ENCODE measurements at regions of chr17 and their contacts with region 1.

Region 1: GRCh38 chr17:49556223-49556971 is 19.3 kb upstream of the NXPH3 start:
- DNase-seq: peak; percentile 81 to 94
- ATAC-seq: peak; percentile 91
- H3K4me3 ChIP-seq: no peak overlapping the region
- H3K27ac ChIP-seq: no peak overlapping the region
- H3K4me1 ChIP-seq: no peaks in the 10 kb centered on the region
- H3K27me3 ChIP-seq: no peaks in the 10 kb centered on the region

Region 2: DNA sequence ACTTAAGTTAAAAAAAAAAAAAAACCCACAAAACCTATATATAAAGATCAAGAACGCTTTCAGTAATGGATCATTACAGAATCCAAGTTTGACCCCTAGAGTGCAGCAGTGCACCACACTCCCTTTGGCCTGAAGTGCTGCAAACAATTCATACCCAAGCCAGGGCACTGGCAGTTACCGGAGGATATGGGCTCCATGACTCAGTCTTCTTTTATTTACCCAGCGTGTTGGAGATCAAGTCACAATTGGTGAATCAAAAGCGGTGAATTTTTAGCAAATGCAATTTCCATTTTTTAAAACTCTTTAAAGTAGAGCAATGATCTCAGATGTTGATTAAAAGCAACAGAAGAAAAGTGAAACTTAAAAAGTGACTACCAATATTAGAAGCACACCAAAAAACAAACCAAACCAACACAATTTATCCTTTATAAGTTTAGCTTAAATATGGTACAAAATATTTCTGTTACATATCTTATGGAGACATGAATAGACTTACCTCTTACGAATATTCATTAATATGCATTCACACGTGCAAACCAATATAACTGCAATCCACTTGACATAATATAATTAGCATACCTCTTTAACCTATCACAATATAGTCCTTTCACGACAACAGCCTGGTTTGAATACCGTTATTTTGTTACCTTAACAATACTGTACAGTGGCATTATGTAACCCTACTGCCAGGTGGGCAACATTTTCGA is 240.7 kb before region 1 on chr17:
- intact Hi-C with region 1: loop called (anchors 10 kb)
- DNase-seq: peak; percentile 78 to 80
- ATAC-seq: peak; percentile 95
- H3K4me3 ChIP-seq: no peak overlapping the region
- H3K27ac ChIP-seq: peak overlapping the region in 1 of 2 donors; percentile 40
- H3K4me1 ChIP-seq: peaks cover 0 to 4% of the 10 kb centered on the region in 2 donors
- H3K27me3 ChIP-seq: no peaks in the 10 kb centered on the region

Region 3: GRCh38 chr17:49407981-49408501 is 148.4 kb before region 1 on chr17:
- intact Hi-C with region 1: loop called in 1 of 2 experiments (anchors 10 kb)
- DNase-seq: peak; percentile 71 to 85
- ATAC-seq: peak; percentile 80
- H3K4me3 ChIP-seq: no peak overlapping the region
- H3K27ac ChIP-seq: no peak overlapping the region
- H3K4me1 ChIP-seq: no peaks in the 10 kb centered on the region
- H3K27me3 ChIP-seq: no peaks in the 10 kb centered on the region

Region 4: DNA sequence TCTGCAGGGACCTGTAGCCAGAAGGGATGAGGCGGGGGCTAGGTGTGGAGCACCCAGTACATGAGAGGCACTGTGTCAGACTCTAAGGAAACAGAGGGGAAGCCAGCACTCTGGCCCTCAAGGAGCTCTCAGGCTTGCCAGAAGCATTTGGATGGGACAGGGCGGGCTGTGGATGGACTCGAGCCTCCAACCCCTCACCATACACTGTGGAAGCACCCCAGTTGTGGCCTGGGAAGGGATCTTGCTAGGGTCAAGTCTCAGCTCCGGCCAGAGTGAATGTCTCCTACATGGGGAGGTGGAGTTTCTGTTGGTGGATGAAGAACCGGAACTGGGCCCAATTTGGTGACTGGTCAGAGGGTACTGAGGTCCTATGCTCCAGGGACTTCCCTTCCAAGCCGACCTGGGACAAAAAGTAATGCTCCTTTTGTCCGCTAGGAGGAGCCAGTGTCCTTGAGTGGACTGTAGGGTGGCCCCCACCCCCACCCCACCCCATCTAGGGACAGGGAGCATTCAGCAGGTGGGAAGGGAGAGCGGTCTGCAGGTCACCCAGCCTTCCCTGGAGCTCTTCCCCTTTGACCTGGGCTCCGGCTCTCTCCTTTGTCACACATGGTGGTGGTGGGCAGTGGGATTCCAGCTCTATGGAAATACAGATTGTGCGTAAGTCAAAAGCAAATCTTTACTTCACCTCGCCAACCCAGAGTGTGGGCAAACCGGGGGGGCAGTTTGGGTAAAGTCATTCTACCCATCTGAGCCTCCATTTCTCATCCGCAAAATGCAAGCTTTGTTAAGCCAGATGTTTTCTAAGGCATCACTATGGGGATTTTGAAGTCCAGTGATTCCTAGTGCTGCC is 121.4 kb before region 1 on chr17:
- intact Hi-C with region 1: loop called (anchors 2 kb)
- DNase-seq: peak in 1 of 2 donors; percentile 72
- ATAC-seq: peak; percentile 52
- H3K4me3 ChIP-seq: no peak overlapping the region
- H3K27ac ChIP-seq: no peak overlapping the region
- H3K4me1 ChIP-seq: no peaks in the 10 kb centered on the region
- H3K27me3 ChIP-seq: no peaks in the 10 kb centered on the region

Region 5: DNA sequence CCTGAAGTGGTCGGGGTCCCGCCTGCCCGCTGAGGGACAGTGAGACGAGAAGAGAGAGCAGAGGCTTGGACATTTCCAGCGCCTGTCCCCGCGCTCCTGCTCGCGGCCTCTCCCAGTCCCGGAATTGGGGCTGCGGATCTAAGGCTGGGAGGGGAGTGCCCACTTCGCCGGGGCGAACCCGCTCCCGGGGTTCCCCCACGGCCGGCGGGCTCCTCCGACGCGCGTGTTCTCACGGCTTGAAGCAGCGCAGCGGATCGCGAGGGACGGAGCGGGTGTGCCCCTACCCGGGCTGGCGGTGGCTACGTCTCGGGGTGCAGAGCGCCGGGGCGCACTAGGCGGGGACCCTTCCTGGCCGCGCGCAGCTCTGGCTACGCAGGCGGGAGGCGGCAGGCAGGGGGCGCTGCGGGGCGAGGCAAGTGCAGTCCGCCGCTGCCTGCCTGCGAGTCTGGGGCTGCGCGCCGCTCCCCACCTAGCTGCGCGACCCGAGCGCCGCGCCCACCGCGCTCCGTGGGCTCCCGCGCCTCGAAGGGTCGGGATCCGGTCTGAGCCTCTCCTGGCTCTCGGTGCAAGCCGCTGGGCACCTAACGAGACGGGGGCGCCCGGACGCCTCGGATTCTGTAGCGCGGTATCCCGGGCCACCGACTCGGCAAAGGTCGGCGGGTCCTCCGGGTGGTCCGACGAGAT is 60.1 kb before region 1 on chr17:
- intact Hi-C with region 1: loop called (anchors 1 to 5 kb)
- DNase-seq: peak; percentile 83 to 94
- ATAC-seq: peak; percentile 87
- H3K4me3 ChIP-seq: no peak overlapping the region
- H3K27ac ChIP-seq: no peak overlapping the region
- H3K4me1 ChIP-seq: no peaks in the 10 kb centered on the region
- H3K27me3 ChIP-seq: no peaks in the 10 kb centered on the region

Measured in aorta (tissue), 5 donors.